Astrocyte of the cerebellum (primary cell): ENCODE measurements at regions of chr1 and their contacts with region 1.

Region 1: DNA sequence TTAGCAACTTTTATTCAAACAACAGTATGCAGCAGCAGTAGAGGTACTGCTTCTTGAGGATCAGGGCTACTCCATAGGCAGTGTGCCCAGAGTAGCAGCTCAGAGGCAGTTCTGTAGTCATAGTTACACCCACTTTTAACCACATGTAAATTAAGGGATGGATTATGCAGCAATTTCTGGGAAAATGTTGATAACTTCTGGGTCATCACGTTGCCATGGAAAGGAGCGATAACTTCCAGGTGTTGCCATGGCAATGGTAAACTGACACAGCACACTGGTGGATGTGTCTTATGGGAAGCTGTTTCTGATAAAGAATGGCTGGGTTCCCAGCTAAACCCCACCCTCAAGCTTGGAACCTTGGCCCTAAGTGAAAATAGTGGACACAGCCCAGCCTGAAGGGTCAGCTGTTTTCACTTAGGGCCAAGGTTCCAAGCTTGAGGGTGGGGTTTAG is 29.0 kb upstream of the PLA2G2A start:
- DNase-seq: no peak
- H3K4me3 ChIP-seq: no peak overlapping the region
- CTCF ChIP-seq: no peak

Region 2: DNA sequence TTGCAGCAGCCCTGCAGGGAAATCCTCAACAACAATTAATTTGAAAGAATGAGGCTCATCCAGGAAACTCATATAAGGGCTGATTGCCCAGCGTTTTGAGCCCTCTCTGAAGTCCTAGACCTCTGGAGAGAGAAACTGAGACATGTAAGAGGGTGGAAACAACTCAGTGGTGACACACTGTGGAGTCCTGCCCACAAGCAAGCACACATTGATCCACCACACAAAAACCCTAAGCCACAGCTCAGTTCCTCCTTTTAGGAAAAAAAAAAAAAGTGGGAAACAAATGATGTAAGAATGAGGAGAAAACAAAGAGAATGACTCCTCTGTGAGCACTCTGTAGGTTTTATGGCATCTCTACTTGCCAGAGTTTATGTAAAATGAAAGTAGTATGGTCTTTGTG is 38.7 kb after region 1 on chr1:
- in situ Hi-C with region 1: no loop called
- DNase-seq: no peak
- H3K4me3 ChIP-seq: no peak overlapping the region
- CTCF ChIP-seq: no peak

Region 3: DNA sequence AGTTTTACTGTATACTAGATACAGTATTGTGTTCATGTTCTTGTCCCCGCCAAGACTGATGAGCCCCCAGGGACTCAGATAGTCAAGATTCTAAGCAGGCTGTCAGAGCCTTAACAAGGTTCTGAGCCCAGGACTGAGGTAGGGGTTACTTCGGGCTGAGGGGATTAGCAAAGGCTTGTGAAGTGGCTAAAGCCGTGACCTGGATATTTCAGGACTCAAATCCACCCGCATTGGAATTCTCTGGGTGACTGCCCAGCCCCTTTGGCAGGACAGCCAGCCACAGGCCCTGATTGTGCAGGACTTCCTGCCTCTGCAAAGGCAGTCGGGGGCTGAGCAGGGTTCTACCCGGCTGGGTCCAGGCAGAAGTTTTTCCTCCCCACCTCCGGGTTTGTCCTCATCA is 61.5 kb after region 1 on chr1 and contains the start of gene PLA2G5:
- in situ Hi-C with region 1: loop called (anchors 5 kb)
- DNase-seq: peak; percentile 8
- H3K4me3 ChIP-seq: no peak within 1 kb of the TSS
- CTCF ChIP-seq: no peak